ENCODE measurements at regions of chr5 and their contacts with region 1.

Region 1: GRCh38 chr5:52710310-52710971 is 77.3 kb upstream of the ITGA1 start:
- DNase-seq: no peak
- H3K4me3 ChIP-seq: no peak overlapping the region
- H3K27ac ChIP-seq: no peak overlapping the region
- H3K4me1 ChIP-seq: no peaks in the 10 kb centered on the region
- H3K27me3 ChIP-seq: no peaks in the 10 kb centered on the region
- CTCF ChIP-seq: no peak
- EP300 ChIP-seq: no peak
- POLR2A ChIP-seq: no peak

Region 2: GRCh38 chr5:52657247-52657645 is 53.2 kb before region 1 on chr5:
- intact Hi-C with region 1: no loop called
- DNase-seq: no peak
- H3K4me3 ChIP-seq: no peak overlapping the region
- H3K27ac ChIP-seq: no peak overlapping the region
- H3K4me1 ChIP-seq: no peaks in the 10 kb centered on the region
- H3K27me3 ChIP-seq: no peaks in the 10 kb centered on the region
- CTCF ChIP-seq: peak in 2 of 3 donors; percentile 20
- EP300 ChIP-seq: no peak
- POLR2A ChIP-seq: no peak

Region 3: DNA sequence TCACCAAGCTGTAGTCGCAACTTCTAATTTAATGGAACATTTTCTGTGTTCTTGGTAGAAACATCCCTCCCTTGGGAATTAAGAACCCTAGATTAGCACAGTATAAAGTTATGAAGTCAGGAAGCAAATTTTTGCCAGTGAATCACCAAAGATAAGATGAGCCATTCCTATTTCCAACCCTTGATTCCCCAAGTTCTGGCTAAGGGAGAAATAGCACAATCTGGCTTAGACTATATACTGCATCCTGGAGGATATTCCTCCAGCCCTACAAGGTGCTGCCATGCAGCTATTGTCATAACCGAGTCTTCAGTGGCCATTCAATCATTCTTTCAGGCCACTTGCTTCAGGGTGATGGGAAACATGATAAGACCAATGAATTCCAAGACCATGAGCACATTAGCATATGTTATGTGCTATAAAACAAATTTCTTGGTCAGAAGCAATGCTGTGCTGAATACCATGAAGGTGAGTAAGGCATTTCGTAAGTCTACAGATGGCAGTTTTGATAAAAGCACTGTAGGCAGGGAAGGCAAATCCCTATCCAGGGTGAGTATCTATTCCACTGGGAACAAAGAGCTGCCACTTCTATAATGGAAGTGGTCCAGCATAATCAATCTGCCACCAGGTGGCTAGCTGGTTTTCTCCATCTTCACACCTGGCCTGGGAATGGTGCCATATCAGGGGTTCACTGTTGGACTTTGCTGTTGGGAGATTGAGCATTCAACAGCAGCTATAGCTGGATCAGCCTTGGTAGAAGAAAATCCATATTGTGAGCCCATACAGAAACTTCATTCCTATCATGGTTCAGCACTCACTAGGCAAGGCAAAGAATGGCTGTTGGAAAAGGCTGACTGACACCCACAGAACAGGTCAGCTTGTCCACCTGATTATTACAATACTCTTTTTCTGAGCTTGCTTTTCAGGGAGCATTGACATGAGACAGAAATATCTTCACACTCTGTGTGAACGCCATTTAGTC is 1619.6 kb after region 1 on chr5:
- intact Hi-C with region 1: loop called in 1 of 4 experiments (anchors 5 kb)
- DNase-seq: no peak
- H3K4me3 ChIP-seq: no peak overlapping the region
- H3K27ac ChIP-seq: no peak overlapping the region
- H3K4me1 ChIP-seq: no peaks in the 10 kb centered on the region
- H3K27me3 ChIP-seq: no peaks in the 10 kb centered on the region
- CTCF ChIP-seq: no peak
- EP300 ChIP-seq: no peak
- POLR2A ChIP-seq: no peak

Measured in ovary (tissue), 10 donors.